Astrocyte of the cerebellum (primary cell): ENCODE measurements at regions of chr11 and their contacts with region 1.

Region 1: DNA sequence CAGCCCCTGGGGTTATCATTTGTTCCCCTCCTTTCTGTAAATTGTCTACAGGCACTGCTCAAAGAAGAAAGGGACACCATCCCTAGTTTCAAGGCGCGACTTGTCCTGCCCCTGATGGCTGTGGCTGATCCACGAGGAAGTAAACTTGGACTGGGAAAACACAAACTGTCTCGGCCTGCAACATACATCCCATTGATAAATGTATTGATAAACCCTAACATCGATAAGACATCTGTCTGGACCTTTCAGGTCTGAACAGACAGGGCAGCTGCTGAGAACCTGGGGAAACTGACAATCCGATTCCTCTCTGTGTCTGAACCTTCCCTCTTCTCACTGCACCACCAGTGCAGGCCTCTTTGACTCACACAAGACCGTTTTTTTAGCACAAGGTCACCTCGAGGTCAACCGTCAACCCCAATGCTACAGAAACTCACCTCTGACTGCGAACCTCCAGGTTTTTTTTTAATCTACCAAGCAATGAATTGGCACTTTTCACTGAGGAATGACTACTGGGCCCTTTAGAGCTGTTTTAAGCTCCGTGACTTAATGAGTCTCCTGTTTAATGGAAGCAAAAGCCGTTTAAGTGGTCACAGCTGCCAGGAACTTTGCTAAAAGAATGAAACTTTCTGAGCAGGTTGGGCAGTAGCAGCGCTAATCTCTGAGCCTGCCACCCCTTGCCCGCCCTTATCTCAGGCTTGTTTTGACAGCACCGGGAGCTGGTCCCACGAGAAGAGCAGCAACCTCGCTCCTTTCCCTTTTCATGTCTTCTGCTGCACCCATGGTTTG is 203.8 kb upstream of the TMEM45B start:
- DNase-seq: no peak
- H3K4me3 ChIP-seq: no peak overlapping the region
- CTCF ChIP-seq: no peak

Region 2: GRCh38 chr11:129131316-129131715 is 480.5 kb before region 1 on chr11:
- in situ Hi-C with region 1: no loop called
- DNase-seq: peak; percentile 42
- H3K4me3 ChIP-seq: no peak overlapping the region
- CTCF ChIP-seq: no peak

Region 3: GRCh38 chr11:129528296-129528695 is 83.6 kb before region 1 on chr11:
- in situ Hi-C with region 1: loop called (anchors 5 kb)
- DNase-seq: no peak
- H3K4me3 ChIP-seq: no peak overlapping the region
- CTCF ChIP-seq: no peak

Region 4: GRCh38 chr11:129578006-129578405 is 33.8 kb before region 1 on chr11:
- in situ Hi-C with region 1: no loop called
- DNase-seq: no peak
- H3K4me3 ChIP-seq: no peak overlapping the region
- CTCF ChIP-seq: no peak